ENCODE measurements at regions of chr1 and their contacts with region 1.

Region 1: GRCh38 chr1:145978854-145979759 is 14.6 kb downstream of the POLR3GL start:
- DNase-seq: peak; percentile 96

Region 2: GRCh38 chr1:145957443-145958319 is 21.4 kb before region 1 on chr1 and contains the start of gene LIX1L:
- intact Hi-C with region 1: loop called (anchors 1 kb)
- DNase-seq: peak; percentile 98
- total RNA-seq, gene LIX1L: 25.6 TPM

Region 3: DNA sequence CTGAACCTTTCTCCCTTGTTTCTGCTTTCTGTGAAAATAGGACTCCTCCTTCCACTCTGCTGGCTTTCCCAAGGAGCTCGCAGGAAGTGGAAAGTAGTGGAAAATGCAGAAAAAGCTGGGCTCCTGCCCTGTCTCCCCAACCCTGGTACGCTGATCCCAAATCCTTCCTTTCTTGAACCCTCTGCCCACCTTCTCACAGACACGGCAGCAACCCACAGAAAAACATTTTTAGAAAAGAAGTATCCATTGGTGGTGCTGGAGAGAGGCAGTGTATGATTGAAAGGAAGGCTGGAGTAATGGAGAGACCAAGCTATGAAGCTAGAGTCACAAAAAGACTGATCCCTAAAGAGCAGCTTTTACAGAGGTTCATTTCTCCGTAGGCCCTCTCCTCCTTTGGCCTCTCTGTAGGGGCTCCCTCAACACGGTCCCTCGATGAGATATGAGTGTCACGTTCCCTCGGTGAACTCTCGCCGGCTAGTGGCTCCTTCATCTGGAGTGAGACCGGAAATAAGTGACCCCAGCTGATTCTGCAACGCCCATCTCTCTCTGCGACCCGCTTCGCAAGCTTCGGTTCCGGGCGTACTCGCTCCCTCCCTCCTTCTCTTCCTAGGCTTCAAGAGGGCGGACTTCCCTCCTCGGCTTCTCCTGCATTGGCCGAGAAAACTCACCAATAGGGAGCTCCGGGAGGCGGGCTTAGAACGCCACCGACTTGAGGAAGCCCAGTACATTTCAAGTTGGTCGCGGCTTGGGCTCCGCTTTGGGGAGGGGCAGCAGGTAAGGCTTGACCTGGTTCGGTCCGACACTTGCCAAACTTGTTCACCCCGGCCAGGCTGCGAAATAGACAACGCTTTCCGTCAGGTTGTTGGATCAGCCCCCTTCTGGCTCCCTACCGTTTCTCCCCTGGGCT is 14.9 kb before region 1 on chr1 and contains the starts of genes ANKRD34A and POLR3GL:
- intact Hi-C with region 1: loop called (anchors 2 kb)
- DNase-seq: peak; percentile 98
- total RNA-seq, gene ANKRD34A: 2.9 TPM
- total RNA-seq, gene POLR3GL: 36.8 TPM

Region 4: GRCh38 chr1:145996433-145997015 is 17.4 kb after region 1 on chr1 and contains the start of gene TXNIP:
- intact Hi-C with region 1: loop called (anchors 1 kb)
- DNase-seq: peak; percentile 100
- total RNA-seq, gene TXNIP: 689 TPM

Region 5: GRCh38 chr1:146007506-146008133 is 28.5 kb after region 1 on chr1:
- intact Hi-C with region 1: loop called (anchors 1 kb)
- DNase-seq: no peak

Region 6: GRCh38 chr1:146019231-146020057 is 40.3 kb after region 1 on chr1:
- intact Hi-C with region 1: no loop called
- DNase-seq: no peak